ENCODE measurements at regions of chr17 and their contacts with region 1.

Region 1: GRCh38 chr17:7572588-7573323 is 6.7 kb upstream of the CD68 start:
- DNase-seq: peak; percentile 100
- H3K4me3 ChIP-seq: peak overlapping the region; percentile 86 to 96 (median 87)
- H3K27ac ChIP-seq: peak overlapping the region; percentile 91
- H3K4me1 ChIP-seq: peaks cover 43% of the 10 kb centered on the region
- H3K27me3 ChIP-seq: no peaks in the 10 kb centered on the region
- CTCF ChIP-seq: no peak
- POLR2A ChIP-seq: peak; percentile 99

Region 2: DNA sequence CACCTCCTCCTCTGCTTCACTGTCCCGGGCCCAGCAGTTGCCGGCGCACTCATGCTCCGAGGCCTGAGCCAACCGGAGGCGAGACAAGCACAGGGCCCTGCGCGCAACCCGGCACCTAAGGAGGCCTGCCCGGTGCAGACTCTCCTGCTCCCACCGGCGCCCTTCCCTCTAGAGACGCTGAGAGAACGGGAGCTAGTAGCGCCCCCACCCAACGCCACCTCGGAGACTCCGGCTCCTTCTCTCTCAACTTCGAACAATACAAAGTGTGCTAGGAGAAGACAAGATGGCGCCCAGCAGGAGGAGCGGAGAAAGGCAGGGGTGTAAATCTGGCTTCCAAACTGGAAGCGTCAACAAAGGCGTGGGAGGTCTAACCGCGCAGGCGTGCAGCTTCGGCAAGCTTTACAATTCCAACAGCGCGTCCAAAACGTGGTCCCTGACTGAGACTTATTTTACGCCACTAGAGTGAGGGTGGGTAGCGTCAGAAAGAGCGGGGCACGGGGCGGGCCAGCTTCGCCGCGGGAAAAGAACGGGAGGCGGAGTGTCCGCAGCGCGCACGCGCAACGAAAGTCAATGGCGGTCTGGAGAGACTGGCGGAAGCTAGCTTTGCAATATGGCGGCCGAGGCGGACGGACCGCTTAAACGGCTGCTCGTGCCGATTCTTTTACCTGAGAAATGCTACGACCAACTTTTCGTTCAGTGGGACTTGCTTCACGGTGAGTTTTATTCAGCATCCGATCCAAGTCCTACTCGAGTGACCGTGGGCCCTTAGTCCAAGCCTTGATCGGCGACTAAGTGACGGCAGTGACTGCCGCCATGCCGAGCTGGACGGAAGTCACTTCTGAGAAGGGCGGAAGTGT is 10.7 kb after region 1 on chr17 and contains the start of gene MPDU1:
- CTCF ChIA-PET with region 1: interaction called, 48 read pairs
- POLR2A ChIA-PET with region 1: interaction called, 6 read pairs
- dilution Hi-C with region 1: no loop called
- intact Hi-C with region 1: loop called (anchors 1 kb)
- DNase-seq: peak; percentile 98
- H3K4me3 ChIP-seq: peak within 1 kb of the TSS; percentile 54 to 90 (median 66)
- H3K27ac ChIP-seq: peak within 1 kb of the TSS; percentile 88
- H3K4me1 ChIP-seq: peaks cover 32% of the 10 kb centered on the region
- H3K27me3 ChIP-seq: no peaks in the 10 kb centered on the region
- CTCF ChIP-seq: no peak
- POLR2A ChIP-seq: peak; percentile 94
- total RNA-seq, gene MPDU1: 61.2 and 78.0 TPM in 2 replicates

Region 3: DNA sequence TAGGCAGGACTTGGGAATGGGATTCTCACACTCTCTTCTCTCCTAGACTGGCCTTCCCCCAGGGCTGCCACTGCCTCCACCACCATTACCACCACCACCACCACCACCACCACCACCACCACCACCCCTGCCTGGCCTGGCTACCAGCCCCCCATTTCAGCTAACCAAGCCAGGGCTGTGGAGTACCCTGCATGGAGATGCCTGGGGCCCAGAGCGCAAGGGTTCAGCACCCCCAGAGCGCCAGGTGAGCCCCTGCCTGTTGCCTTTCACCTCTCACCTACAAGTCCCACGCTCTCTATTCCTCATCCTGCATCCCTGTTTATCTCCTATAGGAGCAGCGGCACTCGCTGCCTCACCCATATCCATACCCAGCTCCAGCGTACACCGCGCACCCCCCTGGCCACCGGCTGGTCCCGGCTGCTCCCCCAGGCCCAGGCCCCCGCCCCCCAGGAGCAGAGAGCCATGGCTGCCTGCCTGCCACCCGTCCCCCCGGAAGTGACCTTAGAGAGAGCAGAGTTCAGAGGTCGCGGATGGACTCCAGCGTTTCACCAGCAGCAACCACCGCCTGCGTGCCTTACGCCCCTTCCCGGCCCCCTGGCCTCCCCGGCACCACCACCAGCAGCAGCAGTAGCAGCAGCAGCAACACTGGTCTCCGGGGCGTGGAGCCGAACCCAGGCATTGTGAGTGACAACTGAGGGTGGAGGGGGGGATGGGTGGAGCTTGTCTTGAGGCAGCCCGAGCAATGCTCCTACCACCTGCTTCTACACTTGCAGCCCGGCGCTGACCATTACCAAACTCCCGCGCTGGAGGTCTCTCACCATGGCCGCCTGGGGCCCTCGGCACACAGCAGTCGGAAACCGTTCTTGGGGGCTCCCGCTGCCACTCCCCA is 274.3 kb after region 1 on chr17:
- CTCF ChIA-PET with region 1: no interaction called
- POLR2A ChIA-PET with region 1: no interaction called
- dilution Hi-C with region 1: no loop called
- intact Hi-C with region 1: no loop called
- DNase-seq: no peak
- H3K4me3 ChIP-seq: no peak overlapping the region
- H3K27ac ChIP-seq: no peak overlapping the region
- H3K4me1 ChIP-seq: peaks cover 6% of the 10 kb centered on the region
- H3K27me3 ChIP-seq: no peaks in the 10 kb centered on the region
- CTCF ChIP-seq: no peak
- POLR2A ChIP-seq: no peak

Measured in endothelial cell of umbilical vein (primary cell).